ENCODE measurements at regions of chr4 and their contacts with region 1.

Region 1: GRCh38 chr4:170047771-170048354 is 21.7 kb upstream of the MFAP3L start:
- DNase-seq: peak; percentile 42
- CTCF ChIP-seq: peak; percentile 77

Region 2: GRCh38 chr4:169810325-169811323 is 237.2 kb before region 1 on chr4:
- in situ Hi-C with region 1: loop called (anchors 10 kb)
- DNase-seq: peak; percentile 62
- CTCF ChIP-seq: peak; percentile 78